Caco-2 (cell line): ENCODE measurements at regions of chr7 and their contacts with region 1.

Region 1: DNA sequence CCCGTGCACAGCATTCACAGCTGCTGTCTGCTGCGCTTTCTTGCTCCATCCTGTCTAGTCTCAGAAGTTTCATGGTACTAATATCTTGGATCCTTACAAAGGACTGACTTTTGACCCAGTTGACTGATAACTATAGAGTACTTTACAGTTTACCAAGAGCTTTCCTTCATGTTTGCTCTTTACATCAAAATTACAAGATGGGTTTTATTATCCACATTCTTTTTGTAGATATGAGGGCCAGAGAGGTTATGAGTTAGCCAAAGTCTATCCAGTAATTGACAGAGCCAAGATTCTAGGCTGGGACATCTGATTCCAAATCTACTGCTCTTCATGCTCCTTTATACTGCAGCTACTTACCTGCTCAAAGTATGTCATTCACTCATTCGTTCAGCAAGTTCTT is 218.2 kb downstream of the AUTS2 start:
- DNase-seq: peak in 1 of 2 experiments; percentile 16
- H3K4me3 ChIP-seq: no peak overlapping the region
- H3K4me3 Mint-ChIP-seq: peak overlapping the region; percentile 27
- H3K27ac Mint-ChIP-seq: peak overlapping the region; percentile 15
- H3K4me1 ChIP-seq: peaks cover 32% of the 10 kb centered on the region
- H3K4me1 Mint-ChIP-seq: peaks cover 27% of the 10 kb centered on the region
- H3K27me3 ChIP-seq: no peaks in the 10 kb centered on the region
- H3K27me3 Mint-ChIP-seq: no peaks in the 10 kb centered on the region
- CTCF ChIP-seq: no peak

Region 2: GRCh38 chr7:69610374-69611084 is 206.0 kb before region 1 on chr7:
- CTCF ChIA-PET with region 1: no interaction called
- POLR2A ChIA-PET with region 1: no interaction called
- intact Hi-C with region 1: no loop called
- DNase-seq: no peak
- H3K4me3 ChIP-seq: no peak overlapping the region
- H3K4me3 Mint-ChIP-seq: no peak overlapping the region
- H3K27ac Mint-ChIP-seq: no peak overlapping the region
- H3K4me1 ChIP-seq: no peaks in the 10 kb centered on the region
- H3K4me1 Mint-ChIP-seq: no peaks in the 10 kb centered on the region
- H3K27me3 ChIP-seq: no peaks in the 10 kb centered on the region
- H3K27me3 Mint-ChIP-seq: peaks cover 13% of the 10 kb centered on the region
- CTCF ChIP-seq: no peak

Region 3: GRCh38 chr7:69780377-69780776 is 36.1 kb before region 1 on chr7:
- CTCF ChIA-PET with region 1: no interaction called
- POLR2A ChIA-PET with region 1: no interaction called
- intact Hi-C with region 1: loop called (anchors 1 kb)
- DNase-seq: peak; percentile 75 to 81
- H3K4me3 ChIP-seq: no peak overlapping the region
- H3K4me3 Mint-ChIP-seq: no peak overlapping the region
- H3K27ac Mint-ChIP-seq: peak overlapping the region; percentile 69
- H3K4me1 ChIP-seq: peaks cover 15% of the 10 kb centered on the region
- H3K4me1 Mint-ChIP-seq: peaks cover 23% of the 10 kb centered on the region
- H3K27me3 ChIP-seq: no peaks in the 10 kb centered on the region
- H3K27me3 Mint-ChIP-seq: no peaks in the 10 kb centered on the region
- CTCF ChIP-seq: no peak